ENCODE measurements at regions of chr10 and their contacts with region 1.

Region 1: GRCh38 chr10:132536971-132537712 is 445 bp upstream of the INPP5A start:
- DNase-seq: peak; percentile 100
- ATAC-seq: peak; percentile 93 to 97 (median 96)
- H3K4me3 ChIP-seq: peak overlapping the region; percentile 56 to 87 (median 70)
- H3K27ac ChIP-seq: peak overlapping the region; percentile 57 to 96 (median 88)
- H3K4me1 ChIP-seq: peaks cover 0 to 58% (median 47%) of the 10 kb centered on the region in 12 donors
- H3K27me3 ChIP-seq: no peaks in the 10 kb centered on the region
- CTCF ChIP-seq: peak in 11 of 12 donors; percentile 20 to 61 (median 48)
- POLR2A ChIP-seq: peak in 1 of 2 donors; percentile 53

Region 2: DNA sequence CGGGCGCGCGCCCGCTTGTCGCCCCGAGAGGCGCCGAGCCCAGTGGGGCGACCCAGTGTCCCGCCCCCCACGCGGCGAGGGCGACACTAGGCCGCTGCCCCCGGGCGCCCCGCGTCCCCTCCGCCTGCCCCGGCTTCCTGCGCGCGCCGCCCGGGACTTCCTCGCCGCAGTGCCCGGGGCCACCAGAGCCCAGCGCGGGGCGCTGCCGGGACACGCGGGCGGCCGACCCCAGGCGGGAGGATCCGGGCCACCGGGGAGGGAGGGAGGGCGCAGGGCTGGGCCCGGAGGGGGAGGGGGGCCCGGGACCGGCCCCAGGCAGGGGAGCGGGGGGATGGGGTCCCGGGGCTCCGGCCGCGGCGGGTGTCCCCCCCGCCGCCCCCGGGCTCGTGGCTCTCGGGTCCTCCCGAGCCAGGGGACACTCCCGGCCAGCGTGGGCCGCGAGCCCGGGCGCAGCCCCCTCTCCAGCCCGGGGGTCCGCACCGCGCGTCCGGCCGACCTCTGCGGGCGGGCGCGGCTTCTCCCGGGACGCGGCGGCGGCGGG is 140.6 kb before region 1 on chr10:
- intact Hi-C with region 1: loop called in 1 of 10 experiments (anchors 2 kb)
- DNase-seq: peak; percentile 68 to 85 (median 75)
- ATAC-seq: peak in 3 of 4 donors; percentile 43 to 59 (median 53)
- H3K4me3 ChIP-seq: peak overlapping the region; percentile 21 to 98 (median 70)
- H3K27ac ChIP-seq: peak overlapping the region; percentile 86 to 99 (median 96)
- H3K4me1 ChIP-seq: peaks cover 0 to 63% (median 39%) of the 10 kb centered on the region in 12 donors
- H3K27me3 ChIP-seq: no peaks in the 10 kb centered on the region
- CTCF ChIP-seq: peak in 8 of 12 donors; percentile 7 to 54 (median 36)
- POLR2A ChIP-seq: no peak

Region 3: GRCh38 chr10:132458593-132459300 is 78.4 kb before region 1 on chr10:
- intact Hi-C with region 1: loop called in 8 of 10 experiments (anchors 2 to 5 kb)
- DNase-seq: peak; percentile 51 to 85 (median 61)
- ATAC-seq: peak; percentile 40 to 67 (median 58)
- H3K4me3 ChIP-seq: no peak overlapping the region
- H3K27ac ChIP-seq: no peak overlapping the region
- H3K4me1 ChIP-seq: peaks cover 0 to 32% (median 22%) of the 10 kb centered on the region in 12 donors
- H3K27me3 ChIP-seq: peaks cover 0 to 10% (median 0%) of the 10 kb centered on the region in 9 donors
- CTCF ChIP-seq: peak; percentile 88 to 99 (median 96)
- POLR2A ChIP-seq: no peak

Region 4: GRCh38 chr10:132571650-132572535 is 34.8 kb after region 1 on chr10:
- intact Hi-C with region 1: loop called in 5 of 10 experiments (anchors 5 kb)
- DNase-seq: peak in 4 of 5 donors; percentile 61 to 87 (median 70)
- ATAC-seq: peak; percentile 81 to 94 (median 88)
- H3K4me3 ChIP-seq: no peak overlapping the region
- H3K27ac ChIP-seq: peak overlapping the region in 7 of 12 donors; percentile 20 to 72 (median 55)
- H3K4me1 ChIP-seq: peaks cover 14 to 56% (median 44%) of the 10 kb centered on the region in 12 donors
- H3K27me3 ChIP-seq: no peaks in the 10 kb centered on the region
- CTCF ChIP-seq: no peak
- POLR2A ChIP-seq: no peak

Region 5: DNA sequence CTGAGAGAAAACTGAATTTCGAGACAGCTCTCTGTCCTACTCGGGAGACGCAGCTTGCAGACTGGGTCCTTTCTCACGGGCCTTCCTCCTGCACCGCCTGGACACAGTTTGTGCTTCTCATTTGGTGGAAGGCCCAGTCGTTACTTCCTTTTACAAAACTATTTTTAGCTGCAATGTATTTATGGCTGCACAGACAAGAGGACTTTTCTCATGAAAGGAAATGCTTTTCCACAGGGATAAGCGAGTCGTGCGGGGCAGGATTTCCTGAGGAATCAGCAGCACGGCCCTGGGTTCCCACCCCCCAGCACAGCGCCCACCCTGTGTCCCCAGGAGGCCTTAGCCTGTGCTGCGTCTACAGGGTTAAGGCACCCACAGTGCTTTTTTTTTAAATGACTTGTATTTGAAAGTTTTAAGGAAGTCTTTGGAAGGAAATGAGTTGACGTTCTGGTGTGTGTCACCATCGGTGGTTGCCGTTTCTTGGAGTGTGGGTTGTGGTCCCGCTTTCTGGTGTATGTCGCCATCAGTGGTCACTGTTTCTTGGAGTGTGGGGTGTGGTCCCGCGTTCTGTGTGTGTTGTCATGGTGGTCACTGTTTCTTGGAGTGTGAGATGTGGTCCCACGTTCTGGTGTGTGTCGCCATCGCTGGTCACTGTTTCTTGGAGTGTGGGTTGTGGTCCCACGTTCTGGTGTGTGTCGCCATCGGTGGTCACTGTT is 51.3 kb after region 1 on chr10:
- intact Hi-C with region 1: loop called in 4 of 10 experiments (anchors 1 to 5 kb)
- DNase-seq: peak in 4 of 5 donors; percentile 64 to 82 (median 79)
- ATAC-seq: peak; percentile 52 to 79 (median 56)
- H3K4me3 ChIP-seq: peak overlapping the region in 9 of 12 donors; percentile 1 to 39 (median 24)
- H3K27ac ChIP-seq: peak overlapping the region; percentile 58 to 87 (median 78)
- H3K4me1 ChIP-seq: peaks cover 29 to 100% (median 89%) of the 10 kb centered on the region in 12 donors
- H3K27me3 ChIP-seq: no peaks in the 10 kb centered on the region
- CTCF ChIP-seq: no peak
- POLR2A ChIP-seq: no peak

Region 6: GRCh38 chr10:132627666-132628531 is 90.8 kb after region 1 on chr10:
- intact Hi-C with region 1: loop called in 7 of 10 experiments (anchors 1 to 5 kb)
- DNase-seq: peak; percentile 54 to 71 (median 68)
- ATAC-seq: peak; percentile 1 to 33 (median 11)
- H3K4me3 ChIP-seq: peak overlapping the region in 10 of 12 donors; percentile 3 to 39 (median 20)
- H3K27ac ChIP-seq: peak overlapping the region; percentile 73 to 98 (median 88)
- H3K4me1 ChIP-seq: peaks cover 21 to 80% (median 65%) of the 10 kb centered on the region in 12 donors
- H3K27me3 ChIP-seq: no peaks in the 10 kb centered on the region
- CTCF ChIP-seq: no peak
- POLR2A ChIP-seq: peak in 1 of 2 donors; percentile 22

Region 7: DNA sequence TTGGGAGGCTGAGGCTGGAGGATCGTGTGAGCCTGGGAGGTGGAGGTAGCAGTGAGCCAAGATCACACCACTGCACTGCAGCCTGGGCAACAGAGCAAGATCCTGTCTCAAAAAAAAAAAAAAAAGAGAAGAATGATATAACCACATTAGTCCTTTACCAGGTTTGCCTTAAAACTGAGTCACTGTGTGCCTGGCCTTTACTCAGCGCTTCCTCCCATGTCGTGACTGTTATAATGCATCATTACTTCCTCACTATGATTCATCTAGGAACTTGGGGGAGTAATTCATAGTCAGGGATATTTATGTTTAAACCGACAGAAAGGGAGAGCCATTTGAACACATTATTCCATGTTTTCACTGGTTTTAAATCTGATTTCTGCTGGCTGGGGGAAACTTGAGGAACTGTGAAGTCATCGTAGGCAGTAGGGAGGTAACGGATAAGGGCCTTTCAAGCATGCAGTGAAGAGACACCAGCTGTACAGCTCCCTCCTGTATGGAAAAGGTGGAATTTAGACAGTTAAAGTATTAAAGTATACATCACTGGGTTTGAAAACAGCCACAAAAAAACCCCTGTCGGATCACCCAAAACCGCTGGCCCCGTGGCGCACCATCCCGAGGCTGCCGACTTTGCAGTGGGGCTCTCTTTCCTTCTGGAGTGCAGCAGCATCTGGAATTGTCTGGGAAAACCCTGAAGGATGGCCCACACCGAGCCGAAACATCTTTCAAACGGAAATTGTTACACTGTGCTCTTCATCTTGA is 129.0 kb after region 1 on chr10:
- intact Hi-C with region 1: no loop called
- DNase-seq: no peak
- ATAC-seq: peak in 3 of 4 donors; percentile 42 to 67 (median 55)
- H3K4me3 ChIP-seq: no peak overlapping the region
- H3K27ac ChIP-seq: peak overlapping the region in 1 of 12 donors; percentile 6
- H3K4me1 ChIP-seq: peaks cover 0 to 9% (median 0%) of the 10 kb centered on the region in 12 donors
- H3K27me3 ChIP-seq: no peaks in the 10 kb centered on the region
- CTCF ChIP-seq: no peak
- POLR2A ChIP-seq: no peak

Measured in heart left ventricle (tissue), 16 donors.